ENCODE measurements at regions of chr3 and their contacts with region 1.

Region 1: GRCh38 chr3:177157492-177157891 is 39.8 kb downstream of the TBL1XR1 start:
- DNase-seq: no peak
- H3K4me3 Mint-ChIP-seq: no peak overlapping the region
- H3K27ac Mint-ChIP-seq: no peak overlapping the region
- H3K4me1 Mint-ChIP-seq: peaks cover 39% of the 10 kb centered on the region
- H3K27me3 Mint-ChIP-seq: no peaks in the 10 kb centered on the region

Region 2: GRCh38 chr3:177144923-177145780 is 12.3 kb before region 1 on chr3:
- intact Hi-C with region 1: loop called (anchors 2 kb)
- DNase-seq: peak; percentile 35
- H3K4me3 Mint-ChIP-seq: peak overlapping the region; percentile 61
- H3K27ac Mint-ChIP-seq: peak overlapping the region; percentile 93
- H3K4me1 Mint-ChIP-seq: peaks cover 69% of the 10 kb centered on the region
- H3K27me3 Mint-ChIP-seq: no peaks in the 10 kb centered on the region